K562 (cell line): ENCODE measurements at regions of chr12 and their contacts with region 1.

Region 1: GRCh38 chr12:11015775-11016430 is 6.5 kb downstream of the TAS2R19 start:
- DNase-seq: no peak
- ATAC-seq: no peak
- H3K4me3 ChIP-seq: no peak overlapping the region
- H3K27ac ChIP-seq: no peak overlapping the region
- H3K4me1 ChIP-seq: no peaks in the 10 kb centered on the region
- H3K27me3 ChIP-seq: no peaks in the 10 kb centered on the region
- CTCF ChIP-seq: no peak
- EP300 ChIP-seq: no peak
- POLR2A ChIP-seq: no peak
- RAD21 ChIP-seq: no peak

Region 2: GRCh38 chr12:11071414-11071813 is 55.5 kb after region 1 on chr12:
- CTCF ChIA-PET with region 1: no interaction called
- POLR2A ChIA-PET with region 1: no interaction called
- in situ Hi-C with region 1: loop called (anchors 5 kb)
- intact Hi-C with region 1: no loop called
- DNase-seq: no peak
- ATAC-seq: no peak
- H3K4me3 ChIP-seq: no peak overlapping the region
- H3K27ac ChIP-seq: no peak overlapping the region
- H3K4me1 ChIP-seq: no peaks in the 10 kb centered on the region
- H3K27me3 ChIP-seq: no peaks in the 10 kb centered on the region
- CTCF ChIP-seq: no peak
- EP300 ChIP-seq: no peak
- POLR2A ChIP-seq: no peak
- RAD21 ChIP-seq: no peak